H1 (cell line): ENCODE measurements at regions of chr1 and their contacts with region 1.

Region 1: DNA sequence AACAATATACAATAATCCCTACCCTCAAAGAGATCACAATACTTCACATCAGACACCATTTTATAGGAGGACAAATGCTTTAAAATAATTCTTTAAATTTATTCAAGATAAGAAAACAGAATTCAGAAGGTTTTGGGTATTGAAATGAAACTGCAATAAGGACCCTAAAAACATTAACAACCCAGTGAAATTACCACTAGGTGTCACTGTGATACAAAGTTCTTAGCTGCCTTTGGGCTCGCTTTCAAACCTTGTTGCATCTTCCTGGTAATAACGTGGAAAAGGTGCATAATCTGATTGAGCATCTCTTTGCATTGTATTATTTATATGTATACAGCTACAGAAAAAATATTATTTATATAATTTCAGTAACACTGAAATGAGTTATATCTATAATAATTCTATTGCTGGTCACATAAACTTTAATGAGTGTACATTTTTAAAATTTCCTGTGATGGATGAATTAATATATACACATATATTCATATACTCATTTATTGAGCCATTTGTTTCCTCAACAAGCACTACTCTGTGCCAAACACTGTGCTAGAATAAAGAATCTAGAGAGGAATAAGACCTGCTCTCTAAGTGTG is 185.2 kb downstream of the FAF1 start:
- DNase-seq: no peak
- H3K4me3 ChIP-seq: no peak overlapping the region
- H3K27ac ChIP-seq: no peak overlapping the region
- H3K4me1 ChIP-seq: no peaks in the 10 kb centered on the region
- H3K27me3 ChIP-seq: no peaks in the 10 kb centered on the region
- CTCF ChIP-seq: peak in 2 of 3 experiments; percentile 41 to 65; a peak in 2 of 4 replicates
- EP300 ChIP-seq: no peak
- POLR2A ChIP-seq: no peak
- RAD21 ChIP-seq: peak; percentile 73 to 79

Region 2: GRCh38 chr1:50681931-50682330 is 92.9 kb before region 1 on chr1:
- CTCF ChIA-PET with region 1: no interaction called
- POLR2A ChIA-PET with region 1: no interaction called
- DNase-seq: no peak
- H3K4me3 ChIP-seq: no peak overlapping the region
- H3K27ac ChIP-seq: no peak overlapping the region
- H3K4me1 ChIP-seq: no peaks in the 10 kb centered on the region
- H3K27me3 ChIP-seq: no peaks in the 10 kb centered on the region
- CTCF ChIP-seq: no peak
- EP300 ChIP-seq: no peak
- POLR2A ChIP-seq: no peak
- RAD21 ChIP-seq: no peak

Region 3: DNA sequence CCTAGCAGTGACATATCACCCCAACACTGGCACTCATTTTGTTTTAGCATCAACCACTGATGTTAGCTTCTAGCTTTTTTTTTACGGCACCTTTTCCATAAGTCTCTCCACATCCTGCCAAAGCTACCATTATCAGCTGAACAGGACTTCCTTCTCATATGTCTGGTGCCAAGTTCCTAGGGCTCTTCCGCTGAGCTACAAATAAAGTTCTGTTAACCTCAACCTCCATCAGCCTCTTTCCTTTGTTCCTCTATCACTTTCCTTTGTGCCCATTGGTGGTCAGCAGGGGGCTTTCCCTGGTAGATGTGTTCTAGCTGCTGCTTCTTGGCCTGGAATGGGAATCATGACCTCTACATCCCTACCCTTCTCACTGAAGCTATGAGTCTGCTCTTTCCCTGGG is 21.4 kb after region 1 on chr1:
- CTCF ChIA-PET with region 1: interaction called, 23 read pairs
- POLR2A ChIA-PET with region 1: no interaction called
- DNase-seq: no peak
- H3K4me3 ChIP-seq: no peak overlapping the region
- H3K27ac ChIP-seq: no peak overlapping the region
- H3K4me1 ChIP-seq: 0 out of 7 replicates have a peak, but pooled peaks cover 0 to 2% (median 0%) of the 10 kb centered on the region in 4 experiments
- H3K27me3 ChIP-seq: no peaks in the 10 kb centered on the region
- CTCF ChIP-seq: no peak
- EP300 ChIP-seq: no peak
- POLR2A ChIP-seq: no peak
- RAD21 ChIP-seq: no peak

Region 4: GRCh38 chr1:50873458-50874187 is 98.8 kb after region 1 on chr1:
- CTCF ChIA-PET with region 1: interaction called, 17 read pairs
- POLR2A ChIA-PET with region 1: no interaction called
- DNase-seq: peak; percentile 63 to 84
- H3K4me3 ChIP-seq: peak overlapping the region in 1 of 4 experiments; percentile 47; a peak in 4 of 8 replicates
- H3K27ac ChIP-seq: no peak overlapping the region
- H3K4me1 ChIP-seq: peaks cover 0 to 3% (median 0%) of the 10 kb centered on the region in 4 experiments; a peak in 1 of 7 replicates
- H3K27me3 ChIP-seq: no peaks in the 10 kb centered on the region
- CTCF ChIP-seq: peak; percentile 3 to 75 (median 68)
- EP300 ChIP-seq: no peak
- POLR2A ChIP-seq: no peak
- RAD21 ChIP-seq: peak; percentile 37 to 45

Region 5: GRCh38 chr1:51000160-51000559 is 225.3 kb after region 1 on chr1:
- CTCF ChIA-PET with region 1: no interaction called
- POLR2A ChIA-PET with region 1: no interaction called
- DNase-seq: no peak
- H3K4me3 ChIP-seq: no peak overlapping the region
- H3K27ac ChIP-seq: no peak overlapping the region
- H3K4me1 ChIP-seq: no peaks in the 10 kb centered on the region
- H3K27me3 ChIP-seq: no peaks in the 10 kb centered on the region
- CTCF ChIP-seq: no peak
- EP300 ChIP-seq: no peak
- POLR2A ChIP-seq: no peak
- RAD21 ChIP-seq: no peak